Activated CD4-positive, alpha-beta memory T cell treated with anti-CD3 and anti-CD28 coated beads for 36 hours (primary cell): ENCODE measurements at regions of chr1 and their contacts with region 1.

Region 1: DNA sequence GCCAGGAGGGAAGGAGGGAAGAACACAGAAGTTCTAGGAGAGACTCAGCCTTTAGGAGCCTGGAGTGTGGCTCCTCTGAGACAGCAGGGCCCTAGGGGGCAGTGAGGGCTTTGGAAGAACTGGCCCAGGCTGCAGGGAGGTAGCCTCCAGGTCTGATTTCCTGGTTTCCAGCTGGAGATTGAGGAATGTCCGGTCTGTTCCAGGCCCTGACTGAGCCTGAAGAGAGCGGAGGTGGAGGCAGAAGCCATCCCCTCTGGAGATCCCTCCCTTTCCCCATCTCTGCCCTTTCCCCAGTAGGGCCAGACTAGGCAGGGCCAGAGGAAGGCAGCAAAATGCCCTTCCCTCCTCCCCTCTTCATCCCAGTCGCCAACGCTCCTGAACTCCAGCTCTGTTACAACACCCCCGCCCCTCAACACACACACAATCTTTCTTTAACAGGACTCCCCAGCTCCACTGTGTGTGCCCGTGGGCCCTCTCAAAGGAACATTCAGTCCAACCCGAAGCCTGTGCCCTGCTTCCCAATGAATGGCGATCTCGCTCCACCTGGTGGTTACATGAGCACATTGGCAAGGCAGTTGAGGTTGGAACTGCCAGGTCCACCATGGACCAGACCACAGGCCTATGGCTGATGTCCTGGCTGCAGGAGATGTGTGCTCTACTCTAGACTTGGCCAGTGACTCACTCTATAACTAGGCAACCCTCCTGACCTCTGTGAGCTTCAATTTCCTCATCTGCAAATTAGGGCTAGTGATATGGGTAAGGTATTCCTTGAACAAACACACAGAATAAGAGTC is 32.0 kb downstream of the MAP7D1 start:
- DNase-seq: peak; percentile 89
- H3K4me3 Mint-ChIP-seq: no peak overlapping the region
- H3K27ac Mint-ChIP-seq: peak overlapping the region; percentile 55
- H3K4me1 Mint-ChIP-seq: peaks cover 4% of the 10 kb centered on the region
- H3K27me3 Mint-ChIP-seq: no peaks in the 10 kb centered on the region

Region 2: DNA sequence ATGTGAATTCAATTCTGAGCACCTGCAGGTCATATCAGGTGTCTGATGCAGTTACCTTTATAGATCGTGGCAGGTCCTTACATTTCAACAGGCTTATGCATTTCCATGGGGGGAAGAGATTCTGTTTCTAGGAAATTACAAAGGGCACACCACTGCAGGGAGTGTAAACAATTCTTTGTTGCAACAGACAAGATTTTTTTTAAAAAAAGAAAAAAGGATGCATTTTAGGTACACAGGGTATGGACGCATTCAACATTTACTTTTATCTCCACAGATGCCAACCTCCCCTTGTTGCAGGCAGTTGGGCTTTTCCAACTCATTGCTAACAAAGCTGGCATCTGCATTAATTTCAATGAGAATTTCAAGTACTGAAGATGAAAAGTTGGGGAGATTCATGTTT is 117.6 kb before region 1 on chr1:
- CTCF ChIA-PET with region 1: no interaction called
- POLR2A ChIA-PET with region 1: no interaction called
- intact Hi-C with region 1: no loop called
- DNase-seq: no peak
- H3K4me3 Mint-ChIP-seq: no peak overlapping the region
- H3K27ac Mint-ChIP-seq: no peak overlapping the region
- H3K4me1 Mint-ChIP-seq: no peaks in the 10 kb centered on the region
- H3K27me3 Mint-ChIP-seq: no peaks in the 10 kb centered on the region

Region 3: GRCh38 chr1:36083993-36084738 is 103.8 kb before region 1 on chr1 and contains the start of gene TEKT2:
- CTCF ChIA-PET with region 1: no interaction called
- POLR2A ChIA-PET with region 1: no interaction called
- intact Hi-C with region 1: no loop called
- DNase-seq: no peak
- H3K4me3 Mint-ChIP-seq: no peak within 1 kb of the TSS
- H3K27ac Mint-ChIP-seq: no peak within 1 kb of the TSS
- H3K4me1 Mint-ChIP-seq: peaks cover 4% of the 10 kb centered on the region
- H3K27me3 Mint-ChIP-seq: peaks cover 23% of the 10 kb centered on the region
- total RNA-seq, gene TEKT2: not detected

Region 4: DNA sequence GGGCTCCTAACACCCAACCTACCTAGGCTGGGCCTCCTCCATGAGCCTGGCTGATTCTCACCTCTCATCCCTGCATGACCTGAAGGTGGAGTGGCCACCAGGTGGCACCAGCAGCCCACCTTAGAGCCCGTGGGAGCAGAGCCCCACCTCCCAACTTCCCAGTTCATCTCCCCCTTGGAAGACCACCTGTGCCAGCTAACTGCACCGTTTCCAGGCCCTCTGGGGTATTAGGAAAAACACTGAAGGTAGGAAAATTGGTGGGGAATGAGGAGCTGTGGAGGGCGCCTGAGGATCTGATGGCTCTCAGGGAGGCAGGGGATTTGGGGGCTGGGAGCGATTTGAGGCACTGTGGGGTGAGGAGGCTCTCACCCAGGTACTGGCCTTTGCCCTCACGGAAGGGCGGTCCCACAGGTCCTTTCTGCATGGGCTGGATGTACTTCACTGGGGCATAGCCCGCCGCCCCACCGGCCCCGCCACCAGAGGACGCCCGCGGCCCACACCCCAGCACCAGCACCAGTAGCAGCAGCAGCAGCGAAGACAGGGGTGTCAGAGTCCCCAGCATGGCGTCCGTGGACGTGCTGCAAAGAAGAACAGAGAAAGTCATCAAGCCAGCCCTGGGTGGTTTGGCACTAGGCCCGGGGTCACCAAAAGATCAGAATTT is 88.2 kb before region 1 on chr1:
- CTCF ChIA-PET with region 1: interaction called, 18 read pairs
- POLR2A ChIA-PET with region 1: interaction called, 3 read pairs
- intact Hi-C with region 1: loop called (anchors 1 kb)
- DNase-seq: peak; percentile 84
- H3K4me3 Mint-ChIP-seq: no peak overlapping the region
- H3K27ac Mint-ChIP-seq: no peak overlapping the region
- H3K4me1 Mint-ChIP-seq: no peaks in the 10 kb centered on the region
- H3K27me3 Mint-ChIP-seq: no peaks in the 10 kb centered on the region

Region 5: GRCh38 chr1:36143424-36143823 is 44.6 kb before region 1 on chr1:
- CTCF ChIA-PET with region 1: interaction called, 151 read pairs
- POLR2A ChIA-PET with region 1: no interaction called
- intact Hi-C with region 1: no loop called
- DNase-seq: no peak
- H3K4me3 Mint-ChIP-seq: no peak overlapping the region
- H3K27ac Mint-ChIP-seq: peak overlapping the region; percentile 40
- H3K4me1 Mint-ChIP-seq: peaks cover 60% of the 10 kb centered on the region
- H3K27me3 Mint-ChIP-seq: no peaks in the 10 kb centered on the region

Region 6: GRCh38 chr1:36160949-36161485 is 27.0 kb before region 1 on chr1:
- CTCF ChIA-PET with region 1: interaction called, 39 read pairs
- POLR2A ChIA-PET with region 1: interaction called, 10 read pairs
- intact Hi-C with region 1: loop called (anchors 1 kb)
- DNase-seq: peak; percentile 88
- H3K4me3 Mint-ChIP-seq: peak overlapping the region; percentile 72
- H3K27ac Mint-ChIP-seq: peak overlapping the region; percentile 95
- H3K4me1 Mint-ChIP-seq: peaks cover 59% of the 10 kb centered on the region
- H3K27me3 Mint-ChIP-seq: no peaks in the 10 kb centered on the region

Region 7: GRCh38 chr1:36285448-36286101 is 97.6 kb after region 1 on chr1:
- CTCF ChIA-PET with region 1: interaction called, 26 read pairs
- POLR2A ChIA-PET with region 1: no interaction called
- intact Hi-C with region 1: no loop called
- DNase-seq: peak; percentile 68
- H3K4me3 Mint-ChIP-seq: no peak overlapping the region
- H3K27ac Mint-ChIP-seq: peak overlapping the region; percentile 80
- H3K4me1 Mint-ChIP-seq: peaks cover 36% of the 10 kb centered on the region
- H3K27me3 Mint-ChIP-seq: no peaks in the 10 kb centered on the region